PC-9 (cell line): ENCODE measurements at regions of chr9 and their contacts with region 1.

Region 1: DNA sequence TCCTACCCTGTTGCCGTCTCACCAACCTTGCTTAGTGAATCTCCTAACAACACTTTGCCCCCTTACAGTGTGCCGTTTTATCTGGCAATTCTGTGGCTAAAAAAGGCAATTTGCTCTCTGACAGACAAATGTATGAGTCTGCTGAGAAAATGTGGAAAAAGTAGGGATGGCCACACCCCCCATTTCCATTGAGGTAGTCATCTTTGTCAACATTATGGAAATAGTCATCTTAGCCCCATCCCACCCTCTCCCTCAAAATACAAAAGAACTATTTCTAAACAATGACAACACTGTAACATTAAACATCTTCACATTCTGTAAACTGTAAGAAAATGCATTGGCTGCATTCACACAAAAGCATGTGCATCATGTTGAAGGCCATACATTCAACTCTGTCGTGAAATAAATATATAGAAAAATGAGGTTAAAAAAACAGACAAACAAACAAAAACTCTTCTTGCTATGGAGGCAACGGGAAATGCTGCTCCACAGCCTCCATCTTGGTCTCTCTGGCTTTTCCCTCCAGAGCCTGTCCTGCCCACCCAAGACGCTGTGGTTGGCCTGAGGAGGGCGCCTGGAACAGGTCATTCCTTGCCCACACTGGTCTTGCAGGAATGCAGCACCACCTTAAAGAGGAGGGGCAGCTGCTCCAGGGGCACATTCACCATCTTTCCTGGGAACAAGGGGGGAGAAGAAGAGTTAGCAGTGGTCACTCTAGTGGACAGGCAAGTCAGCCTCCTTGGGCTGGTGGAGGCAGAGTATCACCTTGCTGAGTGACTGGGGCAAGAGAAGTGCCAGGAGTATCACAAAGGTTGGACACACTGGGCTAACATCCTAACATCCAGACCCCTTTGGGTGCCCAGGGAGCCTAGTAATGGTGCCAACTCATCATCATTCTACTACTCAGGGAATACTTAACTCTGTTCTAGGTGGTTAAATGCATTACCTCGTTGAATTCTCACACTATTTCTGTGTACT is 15.2 kb upstream of the NR5A1 start:
- DNase-seq: no peak
- H3K4me3 ChIP-seq: no peak overlapping the region
- H3K27ac ChIP-seq: no peak overlapping the region
- H3K4me1 ChIP-seq: peaks cover 2% of the 10 kb centered on the region
- H3K27me3 ChIP-seq: no peaks in the 10 kb centered on the region
- CTCF ChIP-seq: no peak

Region 2: GRCh38 chr9:124480621-124480981 is 41.8 kb before region 1 on chr9:
- CTCF ChIA-PET with region 1: interaction called, 12 read pairs
- POLR2A ChIA-PET with region 1: no interaction called
- intact Hi-C with region 1: no loop called
- DNase-seq: peak in 1 of 2 experiments; percentile 20
- H3K4me3 ChIP-seq: no peak overlapping the region
- H3K27ac ChIP-seq: no peak overlapping the region
- H3K4me1 ChIP-seq: no peaks in the 10 kb centered on the region
- H3K27me3 ChIP-seq: peaks cover 12% of the 10 kb centered on the region
- CTCF ChIP-seq: peak; percentile 55

Region 3: DNA sequence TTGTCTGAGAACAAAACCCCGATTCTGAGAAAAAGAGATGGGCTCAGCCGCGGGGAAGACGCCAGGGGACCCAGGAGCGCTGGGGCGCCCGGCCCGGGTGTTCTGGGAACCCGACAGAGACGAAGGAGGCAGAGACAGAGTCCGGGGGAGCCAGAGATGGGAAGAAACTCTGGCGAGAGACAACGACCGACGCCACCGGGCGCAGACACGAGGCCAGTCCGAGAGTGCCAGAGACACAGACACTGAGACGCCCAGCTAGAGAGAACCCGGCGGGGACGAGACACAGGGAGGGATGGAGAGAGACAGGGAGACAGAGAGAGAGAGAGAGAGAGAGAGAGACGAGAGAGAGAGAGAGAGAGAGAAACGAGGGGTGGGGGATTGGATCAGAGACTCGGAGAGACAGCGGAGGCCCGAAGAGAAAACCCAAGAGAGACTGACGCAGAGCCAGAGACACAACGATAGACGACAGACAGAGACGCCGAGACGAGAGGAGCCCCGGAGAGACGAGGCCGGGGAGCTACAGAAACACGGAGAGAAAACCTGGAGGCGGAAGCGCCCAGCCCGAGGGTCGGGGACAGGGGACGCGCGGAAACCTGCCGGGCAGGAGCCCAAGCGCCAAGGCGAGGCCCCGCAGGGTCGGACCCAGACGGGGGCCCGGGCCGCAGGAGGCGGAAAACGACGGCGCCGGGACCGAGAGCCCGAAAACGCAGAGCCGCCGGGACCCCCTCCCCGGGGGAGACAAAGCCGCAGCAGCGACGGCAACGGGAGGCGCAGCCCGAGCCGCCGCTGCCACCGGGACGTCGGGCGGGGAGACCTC is 18.5 kb before region 1 on chr9:
- CTCF ChIA-PET with region 1: interaction called, 10 read pairs
- POLR2A ChIA-PET with region 1: interaction called, 7 read pairs
- intact Hi-C with region 1: no loop called
- DNase-seq: no peak
- H3K4me3 ChIP-seq: no peak overlapping the region
- H3K27ac ChIP-seq: no peak overlapping the region
- H3K4me1 ChIP-seq: no peaks in the 10 kb centered on the region
- H3K27me3 ChIP-seq: peaks cover 17% of the 10 kb centered on the region; the same call in 1 of the 2 replicates
- CTCF ChIP-seq: no peak

Region 4: DNA sequence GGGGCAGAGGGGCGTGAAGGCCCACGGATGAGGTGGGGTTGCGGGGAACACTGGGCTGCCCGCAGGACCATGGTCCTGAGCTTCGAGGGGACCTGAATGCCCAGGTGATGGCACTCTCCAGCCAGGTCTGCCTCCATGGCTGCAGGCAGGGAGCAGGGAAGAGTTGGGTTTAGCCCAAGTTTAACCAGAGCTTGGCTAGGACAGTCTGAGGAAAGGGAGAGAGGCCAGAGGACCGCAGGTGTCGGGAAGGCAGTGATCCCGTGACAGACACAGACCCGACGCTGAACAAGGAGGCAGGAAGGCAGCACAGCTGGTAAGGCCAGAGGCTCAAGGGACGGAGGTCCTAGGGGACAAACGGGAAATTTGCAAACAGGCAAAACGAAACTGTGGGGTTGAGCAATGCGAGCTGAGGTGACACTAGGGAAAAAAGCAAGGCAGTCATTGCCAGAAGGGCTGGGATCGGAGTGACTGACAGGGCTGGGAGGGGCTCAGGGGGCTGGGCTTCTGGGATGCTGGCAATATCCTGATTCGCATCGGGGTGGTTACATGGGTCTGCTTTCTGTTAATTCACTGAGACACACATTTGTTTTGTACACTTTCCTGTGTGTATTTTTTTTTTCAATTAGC is 364.6 kb after region 1 on chr9:
- CTCF ChIA-PET with region 1: no interaction called
- POLR2A ChIA-PET with region 1: no interaction called
- intact Hi-C with region 1: no loop called
- DNase-seq: no peak
- H3K4me3 ChIP-seq: no peak overlapping the region
- H3K27ac ChIP-seq: no peak overlapping the region
- H3K4me1 ChIP-seq: no peaks in the 10 kb centered on the region
- H3K27me3 ChIP-seq: no peaks in the 10 kb centered on the region
- CTCF ChIP-seq: no peak